ENCODE measurements at regions of chr12 and their contacts with region 1.

Region 1: GRCh38 chr12:123972457-123973401 is at the starts of genes CCDC92 and ZNF664:
- DNase-seq: peak; percentile 73 to 94
- H3K4me3 ChIP-seq: peak within 1 kb of the TSS; percentile 72 to 91
- H3K27ac ChIP-seq: peak within 1 kb of the TSS; percentile 97
- H3K4me1 ChIP-seq: peaks cover 4 to 25% of the 10 kb centered on the region in 2 donors
- H3K27me3 ChIP-seq: no peaks in the 10 kb centered on the region
- CTCF ChIP-seq: peak in 2 of 3 experiments; percentile 15 to 21
- total RNA-seq, gene CCDC92: 31.0 TPM
- total RNA-seq, gene ZNF664: 27.7 TPM

Region 2: GRCh38 chr12:122225683-122226407 is 1746.9 kb before region 1 on chr12 and contains the start of gene DIABLO:
- intact Hi-C with region 1: loop called (anchors 5 kb)
- DNase-seq: peak; percentile 99 to 100
- H3K4me3 ChIP-seq: peak within 1 kb of the TSS; percentile 63 to 82
- H3K27ac ChIP-seq: peak within 1 kb of the TSS; percentile 91
- H3K4me1 ChIP-seq: peaks cover 10 to 17% of the 10 kb centered on the region in 2 donors
- H3K27me3 ChIP-seq: no peaks in the 10 kb centered on the region
- CTCF ChIP-seq: peak in 1 of 3 experiments; percentile 5
- total RNA-seq, gene DIABLO: 54.8 TPM

Region 3: GRCh38 chr12:123713398-123713797 is 259.3 kb before region 1 on chr12:
- intact Hi-C with region 1: loop called (anchors 2 kb)
- DNase-seq: peak in 1 of 2 donors; percentile 39
- H3K4me3 ChIP-seq: peak overlapping the region; percentile 95 to 96
- H3K27ac ChIP-seq: no peak overlapping the region
- H3K4me1 ChIP-seq: peaks cover 0 to 16% of the 10 kb centered on the region in 2 donors
- H3K27me3 ChIP-seq: no peaks in the 10 kb centered on the region
- CTCF ChIP-seq: no peak

Region 4: GRCh38 chr12:123757561-123757960 is 215.2 kb before region 1 on chr12:
- intact Hi-C with region 1: loop called (anchors 5 kb)
- DNase-seq: peak; percentile 77 to 94
- H3K4me3 ChIP-seq: no peak overlapping the region
- H3K27ac ChIP-seq: peak overlapping the region; percentile 55 to 58
- H3K4me1 ChIP-seq: peaks cover 3 to 24% of the 10 kb centered on the region in 2 donors
- H3K27me3 ChIP-seq: no peaks in the 10 kb centered on the region
- CTCF ChIP-seq: no peak

Region 5: DNA sequence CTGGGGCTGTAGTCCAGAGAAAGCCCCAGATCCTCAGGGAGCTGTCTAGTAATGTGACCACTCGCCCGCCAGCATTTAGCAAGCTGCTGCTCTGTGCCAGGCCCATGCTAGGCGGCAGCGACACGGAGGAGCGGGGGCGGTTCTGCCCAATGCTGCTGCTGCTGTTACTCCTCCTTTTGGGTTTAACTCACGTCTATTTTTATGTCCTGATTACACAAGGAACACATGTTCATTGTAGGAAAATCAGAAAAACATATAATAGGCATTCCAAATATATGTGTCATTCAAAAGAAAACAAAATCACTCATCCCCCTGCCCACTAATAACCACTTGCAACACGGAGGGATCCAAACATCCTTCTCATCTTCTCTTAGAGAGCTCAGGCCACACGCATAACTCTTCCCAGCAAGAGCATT is 30.5 kb before region 1 on chr12:
- intact Hi-C with region 1: loop called (anchors 1 kb)
- DNase-seq: peak in 1 of 2 donors; percentile 76
- H3K4me3 ChIP-seq: no peak overlapping the region
- H3K27ac ChIP-seq: peak overlapping the region; percentile 59 to 65
- H3K4me1 ChIP-seq: peaks cover 0 to 14% of the 10 kb centered on the region in 2 donors
- H3K27me3 ChIP-seq: no peaks in the 10 kb centered on the region
- CTCF ChIP-seq: no peak

Region 6: DNA sequence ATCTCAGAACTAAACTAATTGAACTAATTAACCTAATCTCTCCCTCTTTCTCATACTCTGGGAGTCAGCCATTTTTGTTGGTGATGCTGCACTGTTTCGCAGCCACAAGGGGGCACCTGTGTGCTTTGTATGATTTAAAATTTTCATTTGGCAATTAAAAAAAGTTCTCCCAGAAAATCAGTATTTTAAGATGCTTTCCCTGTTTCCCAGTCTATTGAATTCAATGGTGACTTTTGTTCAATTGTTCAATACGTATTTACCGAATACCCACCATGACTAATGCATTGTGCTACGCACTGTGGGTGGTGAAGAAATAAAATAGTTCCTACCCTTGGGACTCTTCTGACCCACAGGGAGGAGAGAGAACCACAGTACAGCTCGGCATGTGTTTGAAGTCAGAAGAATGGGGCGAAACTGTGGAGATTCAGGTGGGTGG is 64.0 kb after region 1 on chr12:
- intact Hi-C with region 1: no loop called
- DNase-seq: no peak
- H3K4me3 ChIP-seq: no peak overlapping the region
- H3K27ac ChIP-seq: no peak overlapping the region
- H3K4me1 ChIP-seq: no peaks in the 10 kb centered on the region
- H3K27me3 ChIP-seq: no peaks in the 10 kb centered on the region
- CTCF ChIP-seq: peak; percentile 85 to 88 (median 85)